Left ventricle myocardium inferior (tissue), 1 donor: ENCODE measurements at regions of chr21 and their contacts with region 1.

Region 1: DNA sequence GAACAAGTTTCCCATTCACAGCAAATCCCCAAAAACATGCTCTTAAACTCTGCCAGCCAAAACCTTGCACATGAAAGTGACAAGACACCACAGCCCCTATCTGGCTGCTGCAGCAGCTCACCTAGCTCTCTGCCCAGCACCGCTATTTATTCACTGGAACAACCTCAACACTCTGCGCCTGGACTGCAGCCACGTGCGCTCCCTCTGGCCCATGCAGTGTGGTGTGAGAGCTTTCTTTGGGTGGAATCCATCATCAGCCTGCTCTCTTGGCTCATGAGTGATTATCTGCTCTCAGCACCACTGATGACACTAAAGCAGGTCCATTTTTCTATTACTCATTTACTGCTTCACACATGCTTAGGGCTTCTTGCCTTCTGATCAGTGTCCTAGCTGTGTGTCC is 11.4 kb downstream of the KCNJ6 start:
- DNase-seq: peak; percentile 52
- H3K4me3 ChIP-seq: no peak overlapping the region
- H3K27ac ChIP-seq: no peak overlapping the region
- H3K4me1 ChIP-seq: peaks cover 6% of the 10 kb centered on the region
- H3K27me3 ChIP-seq: peaks cover 41% of the 10 kb centered on the region
- CTCF ChIP-seq: no peak

Region 2: GRCh38 chr21:37711836-37712568 is 192.9 kb before region 1 on chr21:
- intact Hi-C with region 1: loop called (anchors 10 kb)
- DNase-seq: peak; percentile 50
- H3K4me3 ChIP-seq: no peak overlapping the region
- H3K27ac ChIP-seq: peak overlapping the region; percentile 73
- H3K4me1 ChIP-seq: peaks cover 16% of the 10 kb centered on the region
- H3K27me3 ChIP-seq: no peaks in the 10 kb centered on the region
- CTCF ChIP-seq: peak; percentile 83